Uterus (tissue), 4 donors: ENCODE measurements at regions of chr13 and their contacts with region 1.

Region 1: GRCh38 chr13:95644601-95645052 is at the start of gene DZIP1:
- DNase-seq: peak; percentile 85
- H3K4me3 ChIP-seq: peak within 1 kb of the TSS; percentile 63 to 67
- H3K27ac ChIP-seq: peak within 1 kb of the TSS; percentile 84 to 89
- H3K4me1 ChIP-seq: no peaks in the 10 kb centered on the region
- H3K27me3 ChIP-seq: no peaks in the 10 kb centered on the region
- CTCF ChIP-seq: no peak
- POLR2A ChIP-seq: peak; percentile 19 to 22
- total RNA-seq, gene DZIP1: 24.1 to 65.3 (median 42.3) TPM

Region 2: GRCh38 chr13:95536632-95537241 is 107.9 kb before region 1 on chr13:
- intact Hi-C with region 1: no loop called
- DNase-seq: no peak
- H3K4me3 ChIP-seq: no peak overlapping the region
- H3K27ac ChIP-seq: no peak overlapping the region
- H3K4me1 ChIP-seq: peaks cover 0 to 4% of the 10 kb centered on the region in 2 donors
- H3K27me3 ChIP-seq: no peaks in the 10 kb centered on the region
- CTCF ChIP-seq: peak; percentile 14 to 36 (median 24)
- POLR2A ChIP-seq: no peak

Region 3: DNA sequence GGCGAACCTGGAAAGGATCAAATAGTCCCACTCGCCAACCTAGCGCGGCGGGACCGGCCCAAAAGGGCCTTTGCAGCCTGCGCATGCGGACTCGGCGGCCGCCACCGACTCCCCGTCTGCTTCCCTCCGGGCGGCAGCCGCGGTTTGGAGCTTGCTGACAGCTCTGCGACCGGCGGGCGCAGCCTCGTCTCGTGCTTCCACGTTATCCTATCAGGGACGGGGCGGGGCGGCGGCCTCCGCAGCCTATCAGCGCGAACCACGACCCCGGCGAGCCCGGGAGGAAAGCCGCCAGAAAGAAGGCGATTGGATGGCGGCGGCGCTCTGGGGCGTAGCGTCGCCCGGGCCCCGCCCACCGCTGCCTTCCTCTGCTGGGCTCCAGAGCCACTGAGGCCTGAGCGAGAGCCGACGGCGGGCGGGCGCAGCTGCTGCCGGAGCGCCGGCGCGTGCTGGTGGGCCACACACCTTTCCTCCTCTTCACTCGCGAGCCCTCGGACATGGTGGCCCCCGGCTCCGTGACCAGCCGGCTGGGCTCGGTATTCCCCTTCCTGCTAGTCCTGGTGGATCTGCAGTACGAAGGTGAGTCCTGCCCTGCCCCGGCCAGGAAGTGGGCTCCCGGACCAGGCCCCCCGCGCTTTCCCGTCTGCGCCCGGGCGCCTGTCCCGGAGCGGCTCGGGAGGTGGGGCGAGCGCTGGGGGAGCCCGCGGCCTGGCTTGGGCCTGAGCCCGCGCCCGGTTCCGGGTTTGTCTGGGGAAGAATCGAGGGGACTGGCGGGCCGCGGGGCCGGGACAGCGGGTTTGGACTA is 32.3 kb after region 1 on chr13 and contains the start of gene DNAJC3:
- intact Hi-C with region 1: loop called (anchors 5 kb)
- DNase-seq: peak; percentile 98 to 99
- H3K4me3 ChIP-seq: peak within 1 kb of the TSS; percentile 85 to 89
- H3K27ac ChIP-seq: peak within 1 kb of the TSS; percentile 94 to 96
- H3K4me1 ChIP-seq: peaks cover 6% of the 10 kb centered on the region in 2 donors
- H3K27me3 ChIP-seq: no peaks in the 10 kb centered on the region
- CTCF ChIP-seq: peak in 1 of 4 experiments; percentile 16
- POLR2A ChIP-seq: peak; percentile 97
- total RNA-seq, gene DNAJC3: 16.9 to 67.6 (median 53.5) TPM